Heart left ventricle (tissue), 16 donors: ENCODE measurements at regions of chr4 and their contacts with region 1.

Region 1: GRCh38 chr4:16794816-16795445 is 103.5 kb downstream of the LDB2 start:
- DNase-seq: peak in 4 of 5 donors; percentile 56 to 71 (median 59)
- ATAC-seq: peak in 3 of 4 donors; percentile 52 to 74 (median 62)
- H3K4me3 ChIP-seq: no peak overlapping the region
- H3K27ac ChIP-seq: peak overlapping the region in 2 of 12 donors; percentile 35 to 38
- H3K4me1 ChIP-seq: peaks cover 0 to 23% (median 1%) of the 10 kb centered on the region in 12 donors
- H3K27me3 ChIP-seq: no peaks in the 10 kb centered on the region
- CTCF ChIP-seq: peak; percentile 69 to 90 (median 79)
- POLR2A ChIP-seq: no peak

Region 2: GRCh38 chr4:16897991-16898827 is 103.3 kb after region 1 on chr4 and contains the start of gene LDB2:
- intact Hi-C with region 1: loop called in 2 of 10 experiments (anchors 5 to 10 kb)
- DNase-seq: peak; percentile 67 to 85 (median 78)
- ATAC-seq: peak; percentile 92 to 96 (median 92)
- H3K4me3 ChIP-seq: peak within 1 kb of the TSS; percentile 34 to 87 (median 62)
- H3K27ac ChIP-seq: peak within 1 kb of the TSS; percentile 46 to 87 (median 77)
- H3K4me1 ChIP-seq: peaks cover 0 to 25% (median 5%) of the 10 kb centered on the region in 12 donors
- H3K27me3 ChIP-seq: no peaks in the 10 kb centered on the region
- CTCF ChIP-seq: no peak
- POLR2A ChIP-seq: no peak
- total RNA-seq, gene LDB2: 9.5 to 38.7 (median 26.6) TPM

Region 3: GRCh38 chr4:16909281-16909680 is 114.3 kb after region 1 on chr4:
- intact Hi-C with region 1: loop called in 4 of 10 experiments (anchors 10 kb)
- DNase-seq: peak in 3 of 5 donors; percentile 18 to 35 (median 33)
- ATAC-seq: peak in 3 of 4 donors; percentile 43 to 78 (median 57)
- H3K4me3 ChIP-seq: peak overlapping the region in 8 of 12 donors; percentile 10 to 40 (median 18)
- H3K27ac ChIP-seq: peak overlapping the region in 1 of 12 donors; percentile 10
- H3K4me1 ChIP-seq: peaks cover 0 to 12% (median 3%) of the 10 kb centered on the region in 12 donors
- H3K27me3 ChIP-seq: no peaks in the 10 kb centered on the region
- CTCF ChIP-seq: no peak
- POLR2A ChIP-seq: no peak

Region 4: GRCh38 chr4:16916719-16917337 is 121.9 kb after region 1 on chr4:
- intact Hi-C with region 1: loop called in 4 of 10 experiments (anchors 5 to 10 kb)
- DNase-seq: peak in 4 of 5 donors; percentile 27 to 68 (median 48)
- ATAC-seq: peak in 3 of 4 donors; percentile 22 to 69 (median 45)
- H3K4me3 ChIP-seq: no peak overlapping the region
- H3K27ac ChIP-seq: no peak overlapping the region
- H3K4me1 ChIP-seq: no peaks in the 10 kb centered on the region
- H3K27me3 ChIP-seq: no peaks in the 10 kb centered on the region
- CTCF ChIP-seq: peak; percentile 58 to 86 (median 71)
- POLR2A ChIP-seq: no peak

Region 5: DNA sequence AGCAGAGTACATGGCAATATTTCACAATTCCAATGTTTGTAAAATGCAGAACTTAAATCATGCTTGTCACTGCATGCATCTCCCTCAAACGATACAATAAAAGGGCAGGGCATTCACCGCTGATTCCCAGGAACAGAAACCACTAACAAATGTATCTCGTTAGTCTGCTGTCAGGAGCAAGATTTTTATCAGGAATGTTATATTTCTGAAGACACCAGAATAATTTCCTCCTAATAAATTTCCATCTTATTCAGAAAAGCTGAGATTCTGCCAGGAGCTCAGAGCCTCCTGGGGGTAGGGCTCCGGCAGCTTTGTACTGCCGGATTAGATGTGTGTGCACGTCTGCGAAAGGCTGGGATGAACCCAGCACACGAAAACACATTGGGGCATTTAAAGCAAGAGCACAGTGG is 157.5 kb after region 1 on chr4:
- intact Hi-C with region 1: loop called in 1 of 10 experiments (anchors 10 kb)
- DNase-seq: no peak
- ATAC-seq: no peak
- H3K4me3 ChIP-seq: peak overlapping the region in 3 of 12 donors; percentile 6 to 26 (median 20)
- H3K27ac ChIP-seq: no peak overlapping the region
- H3K4me1 ChIP-seq: peaks cover 0 to 8% (median 0%) of the 10 kb centered on the region in 12 donors
- H3K27me3 ChIP-seq: no peaks in the 10 kb centered on the region
- CTCF ChIP-seq: no peak
- POLR2A ChIP-seq: no peak

Region 6: DNA sequence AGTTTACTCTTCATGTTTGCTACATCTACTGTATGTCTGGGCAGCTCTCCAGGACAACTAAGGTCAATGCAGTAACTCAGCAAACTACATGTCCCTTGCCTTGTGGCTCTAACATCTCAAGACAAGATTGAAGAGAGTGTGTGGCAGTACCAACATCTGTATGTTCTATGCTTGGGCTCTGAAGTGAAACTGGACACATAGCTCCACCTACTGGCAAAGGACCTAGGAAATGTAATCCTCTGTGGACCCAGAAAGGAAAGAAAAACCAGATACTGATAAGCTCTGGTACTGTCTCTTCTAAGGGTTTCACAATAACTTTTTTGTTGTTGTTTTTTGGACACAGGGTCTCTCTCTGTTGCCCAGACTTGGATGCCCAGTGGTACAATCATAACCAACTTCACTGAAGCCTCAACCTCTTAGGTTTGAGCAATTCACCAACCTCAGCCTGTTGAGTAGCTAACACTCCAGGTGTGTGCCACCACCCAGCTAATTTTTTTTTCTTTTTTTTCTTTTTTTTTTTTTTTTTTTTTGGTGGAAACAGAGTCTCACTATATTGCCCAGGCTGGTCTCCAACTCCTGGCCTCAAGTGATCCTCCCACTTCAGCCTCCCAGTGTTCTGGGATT is 652.9 kb after region 1 on chr4:
- intact Hi-C with region 1: loop called in 3 of 10 experiments (anchors 10 kb)
- DNase-seq: peak in 2 of 5 donors; percentile 42 to 51
- ATAC-seq: peak; percentile 58 to 91 (median 87)
- H3K4me3 ChIP-seq: no peak overlapping the region
- H3K27ac ChIP-seq: no peak overlapping the region
- H3K4me1 ChIP-seq: peaks cover 0 to 2% (median 0%) of the 10 kb centered on the region in 12 donors
- H3K27me3 ChIP-seq: no peaks in the 10 kb centered on the region
- CTCF ChIP-seq: peak; percentile 48 to 80 (median 64)
- POLR2A ChIP-seq: no peak